ENCODE measurements at regions of chr5 and their contacts with region 1.

Region 1: DNA sequence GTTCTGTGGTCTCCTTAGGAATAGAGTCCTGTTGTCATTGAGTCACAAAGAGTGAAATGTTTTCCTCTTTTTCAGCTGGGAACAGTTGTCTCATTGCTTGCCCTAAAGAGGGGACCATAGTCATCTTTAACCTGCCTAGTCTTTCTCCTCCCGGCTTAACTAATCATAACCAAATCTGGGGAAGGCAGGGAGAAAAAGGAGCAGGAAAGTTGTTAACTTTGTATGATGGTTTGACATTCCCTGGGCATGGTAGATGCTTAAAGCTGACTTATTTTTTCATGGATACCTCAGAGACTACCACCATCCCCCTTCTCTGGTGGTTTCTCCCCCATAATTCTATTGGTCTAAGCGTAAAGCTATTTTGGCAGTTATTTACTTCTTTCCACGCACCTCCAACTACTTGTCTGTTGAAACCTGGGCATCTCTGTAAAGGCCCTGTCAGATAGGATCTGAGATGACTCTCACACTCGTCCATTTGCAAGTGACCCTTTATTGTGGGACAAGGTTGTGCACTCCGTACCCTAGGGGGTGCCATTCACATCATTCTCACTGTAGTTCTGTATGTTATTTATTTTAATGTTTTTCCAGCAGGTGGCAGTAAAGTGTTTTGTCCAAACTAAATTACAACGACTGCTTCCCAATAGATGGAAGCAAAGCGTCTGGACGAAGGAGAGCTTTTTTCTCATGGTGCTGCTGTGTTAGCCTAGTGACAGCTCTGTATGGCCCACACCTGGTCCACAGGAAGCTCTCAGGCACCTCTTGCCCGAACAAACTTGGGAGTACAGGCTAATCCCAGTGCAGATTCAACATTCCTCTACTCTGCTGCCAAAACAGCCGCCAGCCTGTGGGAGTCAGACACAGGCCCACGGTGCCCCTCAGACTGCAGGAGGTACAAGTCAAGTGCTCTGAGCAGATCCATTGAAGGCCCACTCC is 3.0 kb upstream of the FAM13B start:
- DNase-seq: peak; percentile 60
- H3K4me3 Mint-ChIP-seq: peak overlapping the region; percentile 38
- H3K27ac Mint-ChIP-seq: peak overlapping the region; percentile 72
- H3K4me1 Mint-ChIP-seq: peaks cover 46% of the 10 kb centered on the region
- H3K27me3 Mint-ChIP-seq: no peaks in the 10 kb centered on the region

Region 2: GRCh38 chr5:136677217-136677616 is 1358.7 kb before region 1 on chr5:
- intact Hi-C with region 1: no loop called
- DNase-seq: no peak
- H3K4me3 Mint-ChIP-seq: no peak overlapping the region
- H3K27ac Mint-ChIP-seq: no peak overlapping the region
- H3K4me1 Mint-ChIP-seq: no peaks in the 10 kb centered on the region
- H3K27me3 Mint-ChIP-seq: no peaks in the 10 kb centered on the region

Region 3: DNA sequence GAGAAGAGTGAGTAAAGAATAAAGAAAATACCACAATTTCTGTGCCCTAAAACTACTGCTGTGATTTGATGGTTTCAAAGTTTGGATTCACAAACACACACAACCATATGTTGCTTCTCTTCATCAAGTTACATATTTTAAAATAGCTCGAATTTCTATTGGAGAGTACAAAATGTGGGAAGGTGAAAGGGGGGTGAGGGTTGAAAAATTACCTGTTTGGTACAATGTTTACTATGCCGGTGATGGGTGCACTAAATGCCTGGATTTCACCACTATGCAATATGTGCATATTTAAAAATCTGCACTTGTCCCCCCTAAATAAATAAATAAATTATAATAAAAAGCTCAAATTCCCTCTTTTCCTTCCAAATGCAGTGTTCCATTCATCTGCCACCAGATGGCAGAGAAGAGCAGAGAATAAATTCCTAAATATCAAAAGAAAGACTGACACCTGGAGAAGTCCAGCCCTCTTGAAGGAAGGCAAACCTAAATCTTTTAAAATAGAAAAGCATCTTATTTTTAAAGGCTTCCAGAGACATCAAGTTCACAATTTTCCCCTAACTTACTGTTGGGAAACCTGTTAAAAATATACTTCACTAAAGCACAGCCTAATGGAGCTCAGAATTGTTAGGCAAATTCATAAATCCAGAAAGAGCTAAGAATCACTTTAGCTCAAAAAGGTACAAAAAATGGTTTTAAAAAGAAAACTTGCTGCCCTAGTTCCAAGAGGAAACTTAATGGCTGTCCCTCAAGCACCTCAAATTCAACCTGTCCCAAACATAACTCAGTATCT is 256.9 kb before region 1 on chr5:
- intact Hi-C with region 1: loop called (anchors 1 kb)
- DNase-seq: no peak
- H3K4me3 Mint-ChIP-seq: no peak overlapping the region
- H3K27ac Mint-ChIP-seq: no peak overlapping the region
- H3K4me1 Mint-ChIP-seq: no peaks in the 10 kb centered on the region
- H3K27me3 Mint-ChIP-seq: peaks cover 8% of the 10 kb centered on the region

Region 4: GRCh38 chr5:137997726-137998213 is 38.1 kb before region 1 on chr5:
- intact Hi-C with region 1: loop called (anchors 1 kb)
- DNase-seq: no peak
- H3K4me3 Mint-ChIP-seq: no peak overlapping the region
- H3K27ac Mint-ChIP-seq: peak overlapping the region; percentile 79
- H3K4me1 Mint-ChIP-seq: peaks cover 47% of the 10 kb centered on the region
- H3K27me3 Mint-ChIP-seq: no peaks in the 10 kb centered on the region

Region 5: DNA sequence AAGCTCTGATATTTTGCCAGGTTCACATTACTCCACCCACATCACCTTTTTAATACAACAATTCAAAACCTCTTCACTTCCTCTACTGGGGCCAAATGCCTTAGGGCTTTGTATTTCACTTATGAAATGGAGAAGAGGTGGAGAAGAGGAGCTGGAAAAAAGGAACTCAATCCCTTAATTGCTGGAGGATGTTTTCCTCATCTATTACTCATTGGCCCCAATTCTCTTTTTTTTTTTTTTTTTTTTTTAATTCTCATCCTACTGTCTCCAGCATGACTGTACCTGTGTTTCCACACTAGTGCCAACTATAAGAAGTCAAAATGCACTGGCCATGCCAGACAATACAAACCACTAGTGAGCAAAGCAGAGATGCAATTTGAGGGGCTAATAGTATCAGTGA is 23.9 kb before region 1 on chr5:
- intact Hi-C with region 1: no loop called
- DNase-seq: no peak
- H3K4me3 Mint-ChIP-seq: no peak overlapping the region
- H3K27ac Mint-ChIP-seq: no peak overlapping the region
- H3K4me1 Mint-ChIP-seq: no peaks in the 10 kb centered on the region
- H3K27me3 Mint-ChIP-seq: no peaks in the 10 kb centered on the region

Region 6: GRCh38 chr5:138077065-138077696 is 41.3 kb after region 1 on chr5:
- intact Hi-C with region 1: loop called (anchors 2 kb)
- DNase-seq: no peak
- H3K4me3 Mint-ChIP-seq: no peak overlapping the region
- H3K27ac Mint-ChIP-seq: no peak overlapping the region
- H3K4me1 Mint-ChIP-seq: peaks cover 13% of the 10 kb centered on the region
- H3K27me3 Mint-ChIP-seq: peaks cover 4% of the 10 kb centered on the region

Region 7: GRCh38 chr5:138213161-138214029 is 177.5 kb after region 1 on chr5 and contains the start of gene CDC23:
- intact Hi-C with region 1: loop called (anchors 1 kb)
- DNase-seq: peak; percentile 89
- H3K4me3 Mint-ChIP-seq: peak within 1 kb of the TSS; percentile 96
- H3K27ac Mint-ChIP-seq: peak within 1 kb of the TSS; percentile 93
- H3K4me1 Mint-ChIP-seq: peaks cover 24% of the 10 kb centered on the region
- H3K27me3 Mint-ChIP-seq: no peaks in the 10 kb centered on the region
- total RNA-seq, gene CDC23: 48.0 and 50.4 TPM in 2 replicates

Region 8: GRCh38 chr5:138352071-138352721 is 316.3 kb after region 1 on chr5 and contains the start of gene KDM3B:
- intact Hi-C with region 1: loop called (anchors 5 kb)
- DNase-seq: peak; percentile 93
- H3K4me3 Mint-ChIP-seq: peak within 1 kb of the TSS; percentile 100
- H3K27ac Mint-ChIP-seq: peak within 1 kb of the TSS; percentile 97
- H3K4me1 Mint-ChIP-seq: peaks cover 51% of the 10 kb centered on the region
- H3K27me3 Mint-ChIP-seq: peaks cover 3% of the 10 kb centered on the region
- total RNA-seq, gene KDM3B: 55.0 and 59.3 TPM in 2 replicates